Activated CD4-positive, alpha-beta T cell treated with anti-CD3 and anti-CD28 coated beads for 36 hours (primary cell): ENCODE measurements at regions of chr5 and their contacts with region 1.

Region 1: DNA sequence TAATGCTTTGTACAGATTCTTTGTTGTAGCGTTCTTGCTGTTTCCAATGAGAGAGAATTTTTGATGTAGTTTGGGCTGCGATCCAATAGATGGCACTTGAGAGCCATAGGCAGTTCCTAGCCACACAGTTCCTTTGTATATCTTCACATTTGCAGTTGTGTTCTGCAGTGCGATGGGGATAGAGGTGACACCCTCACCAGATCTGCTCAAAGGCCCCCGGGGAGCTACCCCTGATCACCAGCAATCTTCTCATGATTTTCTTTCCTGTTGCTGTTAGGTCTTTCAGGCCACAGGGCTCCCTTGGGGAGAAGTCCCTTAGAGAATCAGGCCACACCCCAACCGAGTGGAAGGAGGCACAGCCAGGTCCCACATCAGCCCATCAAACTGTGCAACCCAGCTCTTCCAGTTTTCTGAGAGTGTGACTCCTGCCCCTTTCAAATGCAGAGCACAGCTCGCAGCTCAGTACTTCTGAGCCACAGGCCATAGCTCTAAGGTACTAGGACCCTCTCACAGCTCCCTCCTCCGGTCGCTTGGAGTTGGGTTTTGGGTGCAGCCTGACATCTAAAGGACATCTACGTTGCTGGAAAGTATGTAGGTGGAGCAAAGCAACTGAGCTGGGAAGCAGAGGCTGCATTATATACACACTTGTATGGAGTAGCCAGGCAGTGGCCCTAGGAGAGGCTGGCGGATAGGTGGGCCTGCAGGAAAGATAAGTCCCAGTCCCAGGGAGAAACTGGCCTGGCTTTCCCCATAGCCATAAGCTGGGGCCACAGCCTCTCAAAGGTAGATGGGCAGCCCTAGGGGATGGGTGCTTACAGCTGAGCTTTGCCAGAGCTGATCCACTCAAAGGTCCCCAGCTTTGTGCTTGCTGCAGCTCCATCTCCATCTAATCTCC is 353.5 kb downstream of the SLCO4C1 start:
- DNase-seq: peak; percentile 15
- ATAC-seq: peak; percentile 53
- H3K4me3 Mint-ChIP-seq: no peak overlapping the region
- H3K27ac Mint-ChIP-seq: no peak overlapping the region
- H3K4me1 Mint-ChIP-seq: no peaks in the 10 kb centered on the region
- H3K27me3 Mint-ChIP-seq: no peaks in the 10 kb centered on the region

Region 2: GRCh38 chr5:100965291-100965690 is 977.3 kb before region 1 on chr5:
- CTCF ChIA-PET with region 1: no interaction called
- POLR2A ChIA-PET with region 1: no interaction called
- intact Hi-C with region 1: no loop called
- DNase-seq: no peak
- ATAC-seq: no peak
- H3K4me3 Mint-ChIP-seq: no peak overlapping the region
- H3K27ac Mint-ChIP-seq: no peak overlapping the region
- H3K4me1 Mint-ChIP-seq: peaks cover 9% of the 10 kb centered on the region
- H3K27me3 Mint-ChIP-seq: no peaks in the 10 kb centered on the region

Region 3: DNA sequence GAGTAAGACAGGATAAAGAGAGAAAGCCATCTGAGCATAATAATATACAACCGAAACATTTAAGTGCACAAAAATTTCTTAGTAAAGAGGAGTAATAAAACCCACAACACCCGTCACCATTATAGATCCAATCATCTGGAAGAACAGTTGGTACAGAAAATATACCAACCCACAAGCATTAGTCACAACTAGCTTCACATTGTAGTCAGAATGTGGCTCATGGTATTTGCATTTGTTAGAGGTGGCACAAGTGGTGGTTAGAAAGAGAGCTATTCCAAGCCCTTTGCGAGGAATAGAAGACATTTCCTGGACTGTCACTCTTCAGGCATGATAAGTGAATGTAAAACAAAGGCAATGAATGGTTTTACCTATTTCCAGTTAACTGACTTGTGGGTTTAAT is 362.0 kb before region 1 on chr5:
- CTCF ChIA-PET with region 1: no interaction called
- POLR2A ChIA-PET with region 1: no interaction called
- intact Hi-C with region 1: no loop called
- DNase-seq: no peak
- ATAC-seq: no peak
- H3K4me3 Mint-ChIP-seq: no peak overlapping the region
- H3K27ac Mint-ChIP-seq: no peak overlapping the region
- H3K4me1 Mint-ChIP-seq: no peaks in the 10 kb centered on the region
- H3K27me3 Mint-ChIP-seq: no peaks in the 10 kb centered on the region

Region 4: DNA sequence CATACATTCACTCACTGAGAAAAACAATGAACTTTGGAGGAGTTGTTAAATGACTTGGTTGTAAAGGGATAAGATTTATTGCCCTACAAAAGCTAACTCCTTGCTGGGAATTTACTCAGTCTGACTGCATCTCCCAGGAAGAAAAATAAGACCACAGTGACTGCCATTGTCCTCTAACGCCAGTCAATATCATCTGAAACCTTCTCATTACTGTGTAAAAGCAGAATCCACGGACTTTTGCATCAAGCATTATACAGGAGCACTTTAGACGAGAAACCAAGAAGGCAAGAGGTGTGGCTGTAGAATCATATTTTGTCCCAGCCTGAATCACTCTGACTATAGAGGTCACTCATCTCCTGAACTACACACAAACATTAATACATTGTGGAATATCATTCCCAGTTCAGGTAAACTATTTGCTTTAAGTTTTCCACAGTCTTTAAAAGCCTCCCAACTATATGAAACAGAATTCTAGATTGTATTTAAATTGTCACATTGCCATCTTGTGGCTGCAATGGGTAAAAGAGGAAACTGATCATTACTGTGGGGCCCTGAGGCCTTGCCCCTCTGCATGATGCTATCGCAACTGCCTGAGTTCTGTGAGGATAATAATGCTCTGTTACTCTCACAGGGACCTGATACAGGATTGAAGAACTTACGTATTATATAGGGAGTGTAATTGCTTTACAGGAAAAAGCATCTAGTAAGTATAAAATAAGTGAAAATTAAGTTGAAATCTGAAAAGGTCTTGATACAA is 210.6 kb after region 1 on chr5:
- CTCF ChIA-PET with region 1: no interaction called
- POLR2A ChIA-PET with region 1: no interaction called
- intact Hi-C with region 1: loop called (anchors 1 to 10 kb)
- DNase-seq: peak; percentile 7
- ATAC-seq: peak; percentile 75
- H3K4me3 Mint-ChIP-seq: no peak overlapping the region
- H3K27ac Mint-ChIP-seq: no peak overlapping the region
- H3K4me1 Mint-ChIP-seq: no peaks in the 10 kb centered on the region
- H3K27me3 Mint-ChIP-seq: no peaks in the 10 kb centered on the region

Region 5: GRCh38 chr5:102223542-102224477 is 281.2 kb after region 1 on chr5:
- CTCF ChIA-PET with region 1: interaction called, 7 read pairs
- POLR2A ChIA-PET with region 1: no interaction called
- intact Hi-C with region 1: loop called (anchors 1 to 5 kb)
- DNase-seq: no peak
- ATAC-seq: no peak
- H3K4me3 Mint-ChIP-seq: no peak overlapping the region
- H3K27ac Mint-ChIP-seq: no peak overlapping the region
- H3K4me1 Mint-ChIP-seq: no peaks in the 10 kb centered on the region
- H3K27me3 Mint-ChIP-seq: peaks cover 4% of the 10 kb centered on the region